ENCODE measurements at regions of chr5 and their contacts with region 1.

Region 1: GRCh38 chr5:159133041-159133741 is 33.5 kb upstream of the EBF1 start:
- ATAC-seq: peak; percentile 26 to 74 (median 52)
- H3K4me3 ChIP-seq: no peak overlapping the region
- H3K27ac ChIP-seq: no peak overlapping the region
- H3K4me1 ChIP-seq: peaks cover 0 to 16% of the 10 kb centered on the region in 2 donors

Region 2: GRCh38 chr5:157761690-157762621 is 1371.2 kb before region 1 on chr5:
- in situ Hi-C with region 1: loop called in 1 of 9 experiments (anchors 25 kb)
- ATAC-seq: peak; percentile 95 to 99 (median 98)
- H3K4me3 ChIP-seq: no peak overlapping the region
- H3K27ac ChIP-seq: no peak overlapping the region
- H3K4me1 ChIP-seq: peaks cover 10 to 17% of the 10 kb centered on the region in 2 donors

Region 3: DNA sequence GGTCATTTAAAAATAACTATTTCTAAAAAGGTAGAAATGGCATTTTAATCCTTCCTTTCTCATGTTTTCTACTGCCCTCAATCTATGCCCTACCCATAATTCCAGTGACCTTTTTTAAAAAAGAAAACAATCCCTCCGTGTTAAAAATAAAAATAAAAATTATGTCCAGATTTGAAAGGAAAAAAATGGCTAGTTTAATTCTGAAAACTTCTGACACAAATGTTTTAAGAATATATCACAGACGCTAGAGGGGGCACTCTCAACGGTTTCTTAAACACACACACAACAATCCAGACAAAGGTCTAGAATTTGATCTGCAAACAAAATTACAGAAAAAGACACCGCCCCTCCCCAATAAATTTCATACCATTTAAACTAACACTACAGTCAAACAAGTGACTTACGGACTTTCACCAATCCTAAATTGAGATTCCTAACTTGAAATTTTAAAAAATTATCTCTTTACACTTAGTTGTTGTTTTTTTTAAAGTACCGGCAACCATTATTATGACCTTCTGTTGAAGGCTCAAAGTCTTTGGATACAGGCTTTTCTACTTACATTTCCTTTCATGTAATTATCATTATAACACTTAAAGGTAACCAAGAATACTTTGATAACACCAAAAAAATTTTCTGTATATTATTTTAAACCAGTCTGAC is 1312.5 kb before region 1 on chr5:
- in situ Hi-C with region 1: loop called in 2 of 9 experiments (anchors 25 kb)
- ATAC-seq: peak in 1 of 8 experiments; percentile 47
- H3K4me3 ChIP-seq: no peak overlapping the region
- H3K27ac ChIP-seq: no peak overlapping the region
- H3K4me1 ChIP-seq: peaks cover 8 to 20% of the 10 kb centered on the region in 2 donors

Region 4: GRCh38 chr5:157994906-157995519 is 1138.2 kb before region 1 on chr5:
- in situ Hi-C with region 1: loop called in 1 of 9 experiments (anchors 25 kb)
- ATAC-seq: peak; percentile 53 to 100 (median 77)
- H3K4me3 ChIP-seq: no peak overlapping the region
- H3K27ac ChIP-seq: no peak overlapping the region
- H3K4me1 ChIP-seq: no peaks in the 10 kb centered on the region

Region 5: GRCh38 chr5:159073026-159073425 is 60.2 kb before region 1 on chr5:
- in situ Hi-C with region 1: no loop called
- ATAC-seq: no peak
- H3K4me3 ChIP-seq: no peak overlapping the region
- H3K27ac ChIP-seq: no peak overlapping the region
- H3K4me1 ChIP-seq: peaks cover 0 to 23% of the 10 kb centered on the region in 2 donors

Measured in motor neuron (in vitro differentiated cells).